ENCODE measurements at regions of chr2 and their contacts with region 1.

Region 1: GRCh38 chr2:127106951-127107621 is at the start of gene BIN1:
- DNase-seq: peak; percentile 93
- H3K4me3 ChIP-seq: peak within 1 kb of the TSS; percentile 68 to 92 (median 78)
- H3K27ac ChIP-seq: peak within 1 kb of the TSS; percentile 68
- H3K4me1 ChIP-seq: peaks cover 6% of the 10 kb centered on the region
- H3K27me3 ChIP-seq: peaks cover 5 to 13% of the 10 kb centered on the region in 2 experiments
- CTCF ChIP-seq: no peak
- POLR2A ChIP-seq: peak; percentile 17
- total RNA-seq, gene BIN1: 36.9 and 41.1 TPM in 2 replicates

Region 2: DNA sequence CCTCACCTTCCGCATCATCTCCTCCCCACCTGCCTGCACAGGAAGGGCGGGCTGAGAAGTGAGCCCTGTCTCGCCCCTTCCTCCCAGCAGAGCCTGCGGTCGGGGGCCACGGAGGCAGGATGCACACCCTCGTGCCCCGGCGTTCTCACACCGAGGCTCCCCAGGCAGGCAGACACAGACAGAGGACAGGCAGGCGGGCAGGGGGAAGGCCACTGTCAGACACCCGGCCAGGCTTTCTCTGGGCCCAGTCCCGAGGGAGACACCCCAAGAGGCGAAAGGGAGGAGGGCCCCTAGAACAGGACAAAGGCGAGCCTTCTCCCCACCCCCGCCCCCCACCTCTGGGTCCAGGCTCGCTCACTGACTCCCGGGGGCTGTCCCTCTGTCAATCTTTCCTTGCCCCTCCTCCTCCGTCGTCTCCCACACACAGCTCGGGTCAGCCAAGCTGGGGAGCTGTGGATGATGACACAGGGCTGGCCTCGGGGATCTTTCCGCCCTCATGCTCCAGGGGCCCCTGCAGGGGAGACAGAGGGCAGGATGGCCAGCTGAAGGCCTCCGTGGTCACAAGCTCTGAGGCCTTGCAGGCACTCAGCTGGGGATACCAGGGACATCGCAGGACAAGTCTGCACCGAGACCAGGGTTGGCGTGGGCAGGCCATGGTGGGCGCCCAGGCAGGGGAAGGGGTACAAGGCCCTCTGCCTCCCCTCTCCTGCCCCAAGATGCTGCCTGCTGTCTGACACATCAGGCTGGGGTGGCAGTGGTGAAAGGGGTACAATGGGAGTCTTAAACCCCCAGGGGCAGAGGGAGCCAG is 25.1 kb before region 1 on chr2:
- CTCF ChIA-PET with region 1: interaction called, 8 read pairs
- POLR2A ChIA-PET with region 1: no interaction called
- dilution Hi-C with region 1: no loop called
- intact Hi-C with region 1: loop called (anchors 1 kb)
- DNase-seq: no peak
- H3K4me3 ChIP-seq: no peak overlapping the region
- H3K27ac ChIP-seq: no peak overlapping the region
- H3K4me1 ChIP-seq: peaks cover 24% of the 10 kb centered on the region
- H3K27me3 ChIP-seq: no peaks in the 10 kb centered on the region
- CTCF ChIP-seq: no peak
- POLR2A ChIP-seq: no peak

Region 3: DNA sequence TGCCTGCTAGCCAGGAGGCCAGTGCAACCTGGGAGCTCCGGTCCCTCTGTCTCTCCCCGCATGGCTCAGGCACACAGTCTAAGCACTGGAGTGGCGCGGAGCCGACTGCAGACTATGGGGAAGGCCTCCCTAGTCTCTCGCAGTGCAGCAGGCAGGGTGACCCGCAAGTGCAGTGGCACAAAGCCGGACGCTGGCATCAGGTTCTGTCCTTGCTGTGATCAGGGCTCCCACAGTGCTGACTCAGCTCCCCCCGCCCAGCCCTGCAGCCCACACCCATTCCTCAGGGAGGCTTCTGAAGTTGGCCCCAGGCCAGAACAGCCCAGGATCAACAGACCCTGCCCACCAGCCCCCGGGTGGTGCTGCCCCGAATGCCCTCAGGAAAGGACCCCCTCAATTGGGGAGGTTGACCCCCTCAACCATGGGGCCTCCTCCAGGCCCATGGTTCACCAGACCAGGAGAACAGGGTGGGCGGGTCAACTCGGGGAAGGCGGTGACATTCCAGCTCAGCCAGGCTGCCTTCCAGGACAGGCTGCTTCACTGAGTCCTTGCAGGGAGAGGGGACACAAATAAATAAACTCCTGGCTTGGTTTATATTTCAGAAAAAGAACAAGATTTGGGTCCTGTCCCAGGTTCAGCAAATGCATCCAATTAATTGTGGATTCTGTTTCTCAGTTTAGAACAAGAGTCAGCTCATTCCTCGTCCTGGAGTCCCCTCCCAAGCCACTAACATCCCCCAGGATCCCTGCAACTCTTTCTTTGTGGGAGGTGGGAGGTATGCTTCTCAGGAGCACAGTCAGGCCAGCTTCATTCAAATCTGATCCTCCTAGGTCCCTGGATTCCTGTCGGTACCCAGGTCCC is 12.3 kb before region 1 on chr2:
- CTCF ChIA-PET with region 1: interaction called, 6 read pairs
- POLR2A ChIA-PET with region 1: no interaction called
- dilution Hi-C with region 1: no loop called
- intact Hi-C with region 1: loop called (anchors 1 kb)
- DNase-seq: no peak
- H3K4me3 ChIP-seq: no peak overlapping the region
- H3K27ac ChIP-seq: no peak overlapping the region
- H3K4me1 ChIP-seq: peaks cover 11% of the 10 kb centered on the region
- H3K27me3 ChIP-seq: no peaks in the 10 kb centered on the region
- CTCF ChIP-seq: no peak
- POLR2A ChIP-seq: no peak

Region 4: GRCh38 chr2:127153691-127154158 is 46.6 kb after region 1 on chr2:
- CTCF ChIA-PET with region 1: interaction called, 6 read pairs
- POLR2A ChIA-PET with region 1: interaction called, 4 read pairs
- dilution Hi-C with region 1: no loop called
- intact Hi-C with region 1: loop called (anchors 1 kb)
- DNase-seq: peak; percentile 86
- H3K4me3 ChIP-seq: no peak overlapping the region
- H3K27ac ChIP-seq: peak overlapping the region; percentile 33
- H3K4me1 ChIP-seq: peaks cover 14% of the 10 kb centered on the region
- H3K27me3 ChIP-seq: no peaks in the 10 kb centered on the region
- CTCF ChIP-seq: no peak
- POLR2A ChIP-seq: no peak

Region 5: DNA sequence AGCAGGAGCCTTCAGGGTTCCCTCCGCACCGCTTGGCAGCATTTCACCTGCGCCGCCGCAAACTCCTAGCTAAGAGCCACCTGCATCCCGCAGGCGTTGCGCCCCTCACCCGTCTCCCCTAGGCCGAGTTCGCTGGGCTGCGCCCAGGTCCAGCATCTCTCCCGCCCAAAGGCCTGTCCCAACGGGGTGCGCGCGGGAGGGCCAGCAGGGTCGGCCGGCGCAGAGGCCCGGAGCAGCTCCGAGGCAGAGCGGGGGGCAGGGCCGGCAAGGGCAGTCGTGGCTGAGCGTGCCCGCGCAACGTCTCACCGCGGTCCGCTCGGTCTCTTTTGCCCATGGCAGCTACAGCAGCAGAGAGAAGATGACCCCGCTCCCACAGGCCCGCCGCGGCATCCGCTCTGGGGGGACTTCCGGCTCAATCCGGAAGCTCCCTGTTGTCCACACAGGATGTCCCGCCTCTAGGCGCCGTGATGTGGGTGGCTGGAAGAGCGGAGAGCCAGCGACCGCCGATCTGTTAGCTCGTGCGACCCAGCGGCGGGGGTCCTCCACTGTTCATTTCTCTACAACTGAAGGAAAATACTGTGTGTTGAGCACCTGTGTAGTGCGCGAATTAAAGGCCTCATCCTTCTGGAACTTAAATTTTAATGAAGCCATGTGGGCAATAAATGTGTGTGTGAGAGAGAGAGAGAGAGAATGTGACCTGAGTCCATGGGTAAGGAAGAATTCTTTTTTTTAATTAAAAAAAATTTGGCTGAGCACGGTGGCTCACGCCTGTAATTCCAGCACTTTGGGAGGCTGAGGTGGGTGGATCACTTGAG is 186.9 kb after region 1 on chr2 and contains the start of gene ERCC3:
- CTCF ChIA-PET with region 1: interaction called, 3 read pairs
- POLR2A ChIA-PET with region 1: no interaction called
- dilution Hi-C with region 1: no loop called
- intact Hi-C with region 1: loop called (anchors 5 kb)
- DNase-seq: peak; percentile 81
- H3K4me3 ChIP-seq: peak within 1 kb of the TSS; percentile 54 to 90 (median 82)
- H3K27ac ChIP-seq: peak within 1 kb of the TSS; percentile 31
- H3K4me1 ChIP-seq: peaks cover 12% of the 10 kb centered on the region
- H3K27me3 ChIP-seq: no peaks in the 10 kb centered on the region
- CTCF ChIP-seq: no peak
- POLR2A ChIP-seq: peak; percentile 90
- total RNA-seq, gene ERCC3: 46.6 and 47.3 TPM in 2 replicates